Transverse colon (tissue), 4 donors: ENCODE measurements at regions of chr3 and their contacts with region 1.

Region 1: DNA sequence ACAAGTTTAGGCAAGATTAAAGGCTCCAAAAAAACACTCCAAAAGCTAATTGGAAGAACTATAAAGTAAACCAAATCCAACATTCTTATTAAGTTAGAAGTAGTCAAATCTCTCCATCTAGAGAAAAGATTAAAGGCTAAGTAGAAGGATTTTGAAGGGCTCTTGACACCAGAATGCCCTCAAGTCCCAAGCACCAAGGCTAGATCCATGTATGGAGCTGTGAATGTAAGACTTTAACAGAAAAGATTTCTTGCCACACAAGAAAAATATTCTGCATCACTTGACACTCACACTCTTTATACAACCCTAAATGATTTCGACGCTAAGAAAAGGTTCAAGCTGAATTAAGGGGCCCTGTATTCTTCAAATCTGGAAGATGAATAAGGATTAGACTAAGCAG is 345.2 kb downstream of the VGLL3 start:
- DNase-seq: no peak
- H3K4me3 ChIP-seq: no peak overlapping the region
- H3K27ac ChIP-seq: no peak overlapping the region
- H3K4me1 ChIP-seq: no peaks in the 10 kb centered on the region
- H3K27me3 ChIP-seq: no peaks in the 10 kb centered on the region
- CTCF ChIP-seq: no peak
- EP300 ChIP-seq: no peak
- POLR2A ChIP-seq: no peak

Region 2: GRCh38 chr3:86316463-86316862 is 329.3 kb before region 1 on chr3:
- in situ Hi-C with region 1: no loop called
- intact Hi-C with region 1: no loop called
- DNase-seq: no peak
- H3K4me3 ChIP-seq: no peak overlapping the region
- H3K27ac ChIP-seq: no peak overlapping the region
- H3K4me1 ChIP-seq: no peaks in the 10 kb centered on the region
- H3K27me3 ChIP-seq: no peaks in the 10 kb centered on the region
- CTCF ChIP-seq: no peak
- EP300 ChIP-seq: no peak
- POLR2A ChIP-seq: no peak

Region 3: DNA sequence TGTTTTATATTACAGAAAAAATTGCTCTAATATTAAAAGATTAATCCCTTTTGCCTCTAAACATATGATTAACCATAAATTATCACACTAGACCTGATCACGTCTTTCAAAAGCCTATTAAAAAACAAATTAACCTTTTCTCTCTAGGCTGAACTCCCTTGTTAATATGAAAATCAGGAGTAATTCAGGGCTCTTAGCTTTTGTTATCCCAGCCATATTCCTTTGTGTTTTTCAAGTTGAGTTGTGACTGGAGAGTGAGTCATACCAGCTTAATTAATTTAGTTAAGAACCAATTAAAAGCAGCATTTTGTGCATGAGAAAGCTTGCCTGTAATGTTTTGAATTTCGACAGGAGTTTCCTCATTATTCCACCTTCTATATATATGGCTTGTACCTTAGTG is 40.6 kb before region 1 on chr3:
- in situ Hi-C with region 1: no loop called
- intact Hi-C with region 1: loop called (anchors 1 kb)
- DNase-seq: no peak
- H3K4me3 ChIP-seq: no peak overlapping the region
- H3K27ac ChIP-seq: no peak overlapping the region
- H3K4me1 ChIP-seq: no peaks in the 10 kb centered on the region
- H3K27me3 ChIP-seq: no peaks in the 10 kb centered on the region
- CTCF ChIP-seq: no peak
- EP300 ChIP-seq: no peak
- POLR2A ChIP-seq: no peak

Region 4: DNA sequence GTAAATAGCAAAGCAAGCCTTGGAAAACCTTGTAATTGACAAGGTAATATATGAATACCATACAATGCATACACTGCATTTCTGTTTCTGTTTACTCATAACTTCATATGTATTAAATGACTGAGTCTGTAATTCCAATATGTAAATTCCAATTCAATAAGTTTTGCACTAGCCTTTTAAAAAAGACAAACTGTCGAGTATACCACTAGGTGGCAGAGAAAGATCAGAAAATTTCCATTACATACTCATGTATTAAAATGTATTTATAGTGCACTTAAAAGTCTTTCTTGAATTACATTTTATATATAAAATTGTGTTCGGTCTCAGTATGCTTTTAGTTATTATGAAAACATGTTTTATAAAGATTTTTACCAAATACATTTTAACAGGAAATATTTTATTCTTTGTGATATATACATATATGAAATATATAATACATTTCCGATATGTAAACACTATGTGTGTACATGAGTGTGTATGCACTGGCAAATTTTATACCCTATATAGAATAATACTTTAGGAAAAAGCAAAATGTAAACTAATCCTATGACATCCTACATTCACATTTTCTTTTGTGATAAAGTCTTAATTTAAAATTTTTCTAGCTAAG is 128.4 kb after region 1 on chr3:
- in situ Hi-C with region 1: no loop called
- intact Hi-C with region 1: no loop called
- DNase-seq: no peak
- H3K4me3 ChIP-seq: no peak overlapping the region
- H3K27ac ChIP-seq: no peak overlapping the region
- H3K4me1 ChIP-seq: no peaks in the 10 kb centered on the region
- H3K27me3 ChIP-seq: no peaks in the 10 kb centered on the region
- CTCF ChIP-seq: peak; percentile 31 to 47 (median 40)
- EP300 ChIP-seq: no peak
- POLR2A ChIP-seq: no peak